Activated CD4-positive, alpha-beta T cell treated with anti-CD3 and anti-CD28 coated beads, Interleukin-2, amount 10 ng/mL, durations not matched to agents 24 days and 14 days (primary cell): ENCODE measurements at regions of chr13 and their contacts with region 1.

Region 1: DNA sequence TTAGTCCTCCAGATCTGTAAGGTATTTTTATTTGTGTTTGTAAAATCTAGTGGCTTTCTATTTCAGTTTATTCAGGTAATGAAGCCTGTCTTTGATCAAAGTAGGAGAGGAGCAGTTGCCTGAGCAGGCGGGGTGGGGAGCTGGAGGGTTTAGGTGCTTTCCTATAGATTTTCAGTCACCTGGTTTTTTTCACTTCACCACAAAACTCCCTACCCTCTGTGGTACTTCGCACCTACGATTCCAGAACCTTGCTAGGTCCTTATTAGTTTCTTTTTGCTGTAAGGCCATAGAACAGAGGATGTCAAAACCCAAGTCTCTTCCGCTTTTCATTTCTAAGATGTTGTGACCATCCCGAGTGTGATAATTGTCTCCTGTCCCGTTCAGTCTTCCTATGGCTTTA is 26.6 kb downstream of the SLAIN1 start:
- DNase-seq: peak; percentile 61
- H3K4me3 Mint-ChIP-seq: no peak overlapping the region
- H3K27ac Mint-ChIP-seq: no peak overlapping the region
- H3K4me1 Mint-ChIP-seq: peaks cover 25% of the 10 kb centered on the region
- H3K27me3 Mint-ChIP-seq: no peaks in the 10 kb centered on the region

Region 2: DNA sequence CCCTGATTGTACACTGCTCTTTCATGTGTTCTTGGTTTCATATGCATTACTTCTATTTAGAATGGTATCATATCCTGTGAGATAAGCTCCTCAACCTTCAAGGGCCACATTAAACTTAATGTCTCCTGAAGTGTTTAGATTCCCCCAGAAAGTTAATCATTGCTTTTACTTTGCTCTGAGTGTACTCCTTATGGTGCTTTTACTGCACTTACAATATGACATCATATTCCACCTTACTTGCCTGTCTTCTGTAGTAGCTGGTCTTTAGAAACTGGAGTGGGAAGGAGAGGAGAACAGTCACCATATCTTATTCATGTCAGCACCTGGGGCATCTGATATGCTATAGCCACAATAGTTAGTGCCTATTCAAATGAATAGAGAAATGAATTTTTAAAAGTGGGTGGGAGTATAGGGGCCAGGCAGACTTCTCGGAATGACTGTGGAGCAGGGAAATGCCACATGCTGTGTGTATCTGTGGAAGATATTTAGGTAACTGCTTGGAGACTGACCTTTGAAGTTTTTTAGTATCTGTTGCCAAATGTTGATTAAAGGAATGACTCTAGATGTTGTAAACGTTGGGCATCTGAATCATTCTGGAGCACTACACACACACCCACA is 13.6 kb after region 1 on chr13:
- intact Hi-C with region 1: loop called (anchors 2 kb)
- DNase-seq: no peak
- H3K4me3 Mint-ChIP-seq: no peak overlapping the region
- H3K27ac Mint-ChIP-seq: no peak overlapping the region
- H3K4me1 Mint-ChIP-seq: peaks cover 4% of the 10 kb centered on the region
- H3K27me3 Mint-ChIP-seq: no peaks in the 10 kb centered on the region

Region 3: DNA sequence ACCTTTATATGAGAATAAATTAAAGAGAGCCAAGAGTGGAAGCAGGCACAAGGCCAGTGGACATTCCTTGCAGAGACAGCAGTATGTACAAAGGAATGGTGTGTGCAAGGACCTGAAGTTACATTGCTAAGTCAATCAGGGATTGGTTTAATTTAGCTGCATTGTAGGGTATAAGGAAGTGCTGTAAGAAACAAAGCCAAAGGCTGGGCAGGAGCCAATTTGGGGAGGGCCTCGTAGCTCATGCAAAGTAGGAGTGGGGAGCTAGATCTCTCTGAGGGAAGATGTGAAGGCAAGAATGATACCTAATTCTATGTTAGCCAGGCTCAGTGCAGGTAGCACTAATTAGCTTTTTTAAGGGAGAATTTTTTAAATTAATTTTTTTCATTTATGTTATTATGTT is 50.1 kb after region 1 on chr13:
- intact Hi-C with region 1: no loop called
- DNase-seq: no peak
- H3K4me3 Mint-ChIP-seq: no peak overlapping the region
- H3K27ac Mint-ChIP-seq: no peak overlapping the region
- H3K4me1 Mint-ChIP-seq: no peaks in the 10 kb centered on the region
- H3K27me3 Mint-ChIP-seq: no peaks in the 10 kb centered on the region

Region 4: DNA sequence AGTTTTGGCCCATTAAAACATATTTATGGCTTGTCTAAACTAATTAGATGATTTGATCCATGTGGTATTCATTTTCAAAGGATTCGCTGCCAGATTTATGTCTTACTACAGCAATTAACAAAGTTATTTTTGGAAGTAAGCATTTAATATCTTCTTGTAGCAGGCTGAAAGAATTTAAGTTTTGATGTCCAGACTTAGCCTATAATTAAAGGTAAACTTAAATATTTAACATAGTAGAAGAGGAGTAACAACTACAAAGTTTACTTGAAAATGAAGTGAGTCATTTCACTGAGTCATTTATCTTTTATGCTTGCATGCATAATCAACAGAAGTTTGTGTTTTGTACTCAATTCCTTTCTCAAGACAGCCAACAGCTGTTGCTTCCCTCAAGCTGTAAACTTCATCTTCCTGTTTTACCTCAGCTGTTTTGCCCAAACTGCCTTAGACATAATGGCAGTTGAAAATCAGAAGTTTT is 136.5 kb after region 1 on chr13:
- intact Hi-C with region 1: no loop called
- DNase-seq: no peak
- H3K4me3 Mint-ChIP-seq: no peak overlapping the region
- H3K27ac Mint-ChIP-seq: no peak overlapping the region
- H3K4me1 Mint-ChIP-seq: no peaks in the 10 kb centered on the region
- H3K27me3 Mint-ChIP-seq: peaks cover 4% of the 10 kb centered on the region

Region 5: GRCh38 chr13:78609464-78610205 is 885.5 kb after region 1 on chr13:
- intact Hi-C with region 1: no loop called
- DNase-seq: peak; percentile 66
- H3K4me3 Mint-ChIP-seq: peak overlapping the region; percentile 76
- H3K27ac Mint-ChIP-seq: no peak overlapping the region
- H3K4me1 Mint-ChIP-seq: peaks cover 15% of the 10 kb centered on the region
- H3K27me3 Mint-ChIP-seq: peaks cover 68% of the 10 kb centered on the region

Region 6: GRCh38 chr13:79079351-79080105 is 1355.4 kb after region 1 on chr13:
- intact Hi-C with region 1: no loop called
- DNase-seq: no peak
- H3K4me3 Mint-ChIP-seq: no peak overlapping the region
- H3K27ac Mint-ChIP-seq: no peak overlapping the region
- H3K4me1 Mint-ChIP-seq: peaks cover 5% of the 10 kb centered on the region
- H3K27me3 Mint-ChIP-seq: peaks cover 6% of the 10 kb centered on the region